Activated CD4-positive, alpha-beta memory T cell treated with anti-CD3 and anti-CD28 coated beads for 36 hours (primary cell): ENCODE measurements at regions of chr3 and their contacts with region 1.

Region 1: DNA sequence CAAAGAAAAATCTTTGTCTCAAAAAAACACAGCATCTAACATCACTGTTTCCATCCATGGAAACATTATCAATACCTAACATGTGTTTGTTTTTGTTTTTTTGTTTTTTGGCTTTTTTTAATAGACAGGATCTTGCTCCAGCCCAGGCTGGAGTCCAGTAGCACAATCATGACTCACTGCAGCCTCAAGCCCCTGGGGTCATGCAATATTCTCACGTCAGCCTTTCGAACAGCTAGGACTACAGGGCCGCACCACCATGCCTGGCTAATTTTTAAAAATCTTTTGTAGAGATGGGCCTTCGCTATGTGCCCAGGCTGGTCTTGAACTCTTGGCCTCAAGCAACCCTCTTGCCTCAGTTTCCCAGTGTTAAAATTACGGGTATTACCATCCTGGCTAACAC is 52.8 kb downstream of the RAF1 start:
- DNase-seq: no peak
- H3K4me3 Mint-ChIP-seq: no peak overlapping the region
- H3K27ac Mint-ChIP-seq: no peak overlapping the region
- H3K4me1 Mint-ChIP-seq: peaks cover 46% of the 10 kb centered on the region
- H3K27me3 Mint-ChIP-seq: no peaks in the 10 kb centered on the region

Region 2: GRCh38 chr3:12556671-12557472 is 54.2 kb before region 1 on chr3 and contains the start of gene MKRN2:
- CTCF ChIA-PET with region 1: no interaction called
- POLR2A ChIA-PET with region 1: no interaction called
- intact Hi-C with region 1: loop called (anchors 1 kb)
- DNase-seq: peak; percentile 89
- H3K4me3 Mint-ChIP-seq: peak within 1 kb of the TSS; percentile 78
- H3K27ac Mint-ChIP-seq: peak within 1 kb of the TSS; percentile 91
- H3K4me1 Mint-ChIP-seq: peaks cover 57% of the 10 kb centered on the region
- H3K27me3 Mint-ChIP-seq: peaks cover 26% of the 10 kb centered on the region
- total RNA-seq, gene MKRN2: 28.5 to 30.1 TPM

Region 3: GRCh38 chr3:12624056-12624455 is 12.9 kb after region 1 on chr3:
- CTCF ChIA-PET with region 1: no interaction called
- POLR2A ChIA-PET with region 1: no interaction called
- intact Hi-C with region 1: loop called (anchors 2 kb)
- DNase-seq: no peak
- H3K4me3 Mint-ChIP-seq: no peak overlapping the region
- H3K27ac Mint-ChIP-seq: no peak overlapping the region
- H3K4me1 Mint-ChIP-seq: peaks cover 54% of the 10 kb centered on the region
- H3K27me3 Mint-ChIP-seq: no peaks in the 10 kb centered on the region